Brain microvascular endothelial cell (primary cell): ENCODE measurements at regions of chr10 and their contacts with region 1.

Region 1: DNA sequence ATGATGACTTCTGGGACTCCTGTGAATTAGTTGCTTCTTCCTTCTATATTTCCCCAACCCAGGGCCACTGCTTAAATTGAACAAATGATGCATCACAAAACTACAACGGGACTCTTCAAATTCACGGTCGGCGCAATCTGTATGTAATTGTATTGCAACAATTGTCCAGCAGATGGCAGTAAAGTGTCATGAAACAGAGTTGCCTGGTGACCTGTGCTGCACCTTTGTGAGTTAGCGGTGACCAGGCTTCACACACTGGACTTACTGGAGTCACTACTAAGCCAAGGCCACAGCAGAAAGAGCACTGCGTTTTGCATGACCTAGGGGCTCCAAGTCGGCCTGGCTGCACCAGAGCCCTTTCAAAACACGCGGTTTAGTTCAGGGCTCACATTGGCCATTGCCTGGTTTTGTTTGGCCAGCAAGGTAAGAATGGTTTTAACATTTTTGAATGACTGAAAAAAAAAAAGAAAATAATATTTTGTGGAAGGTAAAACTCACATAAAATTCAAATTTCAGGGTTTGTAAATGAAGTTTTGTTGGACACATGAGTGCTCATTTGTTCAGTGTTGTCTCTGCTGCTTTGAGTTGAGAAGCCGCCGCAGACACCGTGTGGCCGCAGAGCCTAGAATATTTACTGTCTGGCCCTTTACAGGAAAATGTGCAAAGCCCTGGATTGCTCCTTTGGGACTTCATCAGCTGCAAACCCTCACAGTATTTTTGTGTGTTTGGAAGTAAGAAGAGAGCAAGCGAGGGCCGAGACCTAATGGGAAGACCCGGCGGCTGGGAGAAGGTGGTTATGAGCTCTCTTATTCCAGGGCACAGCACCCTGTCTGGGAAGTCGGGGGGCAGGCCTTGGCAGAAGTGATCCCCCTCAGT is 23.2 kb upstream of the ZNF32 start:
- DNase-seq: peak; percentile 64
- H3K4me3 ChIP-seq: no peak overlapping the region
- H3K27ac ChIP-seq: no peak overlapping the region
- H3K27me3 ChIP-seq: no peaks in the 10 kb centered on the region
- CTCF ChIP-seq: peak; percentile 68

Region 2: GRCh38 chr10:43627942-43628341 is 44.0 kb before region 1 on chr10:
- in situ Hi-C with region 1: no loop called
- DNase-seq: no peak
- H3K4me3 ChIP-seq: no peak overlapping the region
- H3K27ac ChIP-seq: no peak overlapping the region
- H3K27me3 ChIP-seq: no peaks in the 10 kb centered on the region
- CTCF ChIP-seq: no peak

Region 3: DNA sequence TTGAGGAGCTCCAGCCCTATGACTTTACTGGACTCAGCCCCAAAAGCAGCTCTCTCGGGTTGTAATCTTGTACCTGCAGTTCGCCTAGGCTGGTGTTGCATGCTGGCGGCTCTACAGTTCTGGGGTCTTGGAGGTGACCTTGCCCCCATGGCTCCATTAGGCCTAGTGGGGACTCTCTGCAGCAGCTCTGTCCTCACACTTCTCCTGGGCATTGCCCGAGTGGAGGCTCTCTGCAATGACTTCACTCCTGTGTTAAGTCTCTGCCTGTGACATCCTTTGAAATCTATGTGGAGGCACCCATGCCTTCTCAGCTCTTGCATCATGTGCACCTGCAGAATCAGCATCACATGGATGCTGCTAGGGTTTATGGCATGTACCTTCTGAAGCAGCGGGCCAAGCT is 166.4 kb after region 1 on chr10:
- in situ Hi-C with region 1: no loop called
- DNase-seq: no peak
- H3K4me3 ChIP-seq: no peak overlapping the region
- H3K27ac ChIP-seq: no peak overlapping the region
- H3K27me3 ChIP-seq: no peaks in the 10 kb centered on the region
- CTCF ChIP-seq: no peak

Region 4: GRCh38 chr10:44864637-44865288 is 1192.9 kb after region 1 on chr10:
- in situ Hi-C with region 1: loop called (anchors 25 kb)
- DNase-seq: peak; percentile 88
- H3K4me3 ChIP-seq: peak overlapping the region; percentile 62
- H3K27ac ChIP-seq: peak overlapping the region; percentile 74
- H3K27me3 ChIP-seq: no peaks in the 10 kb centered on the region
- CTCF ChIP-seq: peak; percentile 97